HEK293T (cell line): ENCODE measurements at regions of chr1 and their contacts with region 1.

Region 1: DNA sequence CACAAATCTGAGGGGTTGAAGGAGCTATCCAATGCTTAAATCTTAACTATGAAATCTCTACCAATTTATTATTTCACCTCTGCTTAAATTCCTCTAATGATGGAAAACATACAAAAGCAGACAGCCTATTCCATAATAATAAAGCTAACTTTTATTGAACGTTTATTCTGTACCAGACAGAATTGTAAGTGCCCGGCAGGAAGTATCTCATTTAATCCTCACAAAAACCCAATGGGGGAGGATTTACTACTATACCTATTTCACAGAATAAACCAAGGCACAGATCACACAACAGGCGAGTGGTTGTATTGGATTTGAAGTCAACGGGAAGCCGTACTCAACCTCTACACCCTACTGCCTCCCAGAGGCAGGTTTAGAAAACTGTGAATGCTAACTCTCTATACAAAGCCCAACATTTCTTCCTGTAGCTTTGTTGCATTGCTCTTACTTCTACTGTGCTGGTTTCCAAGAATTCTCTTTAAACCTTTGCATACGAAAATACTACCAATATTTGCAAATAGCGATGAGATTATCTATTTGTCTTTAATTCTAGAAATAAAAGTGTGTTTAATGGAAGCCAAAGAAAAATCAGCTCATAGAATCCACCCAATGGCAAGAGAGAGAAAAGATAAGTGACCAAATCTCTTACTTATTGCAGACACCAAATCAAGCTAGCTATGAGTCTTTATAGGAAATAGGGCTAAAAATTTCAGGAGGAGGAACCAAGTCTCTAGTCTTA is 33.5 kb upstream of the C1orf53 start:
- DNase-seq: peak; percentile 67

Region 2: DNA sequence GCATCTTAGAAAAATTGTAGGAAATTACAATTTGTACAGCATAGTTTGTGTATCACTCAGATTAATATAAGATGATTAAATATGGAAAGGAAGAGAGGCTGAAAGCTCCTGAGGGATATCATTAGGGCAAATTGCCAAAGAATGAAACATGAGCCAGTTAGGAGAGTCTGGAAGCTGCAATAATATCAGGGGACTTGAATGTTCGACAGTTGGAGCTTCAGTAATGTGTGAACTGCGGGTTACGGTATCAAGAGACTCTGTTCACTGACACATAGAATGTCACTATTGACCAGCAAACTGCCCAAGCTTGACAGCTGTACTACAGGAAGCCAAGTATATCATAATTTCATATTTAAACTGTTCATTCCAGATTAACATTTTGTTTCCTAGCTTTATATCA is 250.9 kb before region 1 on chr1:
- CTCF ChIA-PET with region 1: interaction called, 12 read pairs
- POLR2A ChIA-PET with region 1: no interaction called
- DNase-seq: no peak